Cardiac septum (tissue), 1 donor: ENCODE measurements at regions of chr20 and their contacts with region 1.

Region 1: DNA sequence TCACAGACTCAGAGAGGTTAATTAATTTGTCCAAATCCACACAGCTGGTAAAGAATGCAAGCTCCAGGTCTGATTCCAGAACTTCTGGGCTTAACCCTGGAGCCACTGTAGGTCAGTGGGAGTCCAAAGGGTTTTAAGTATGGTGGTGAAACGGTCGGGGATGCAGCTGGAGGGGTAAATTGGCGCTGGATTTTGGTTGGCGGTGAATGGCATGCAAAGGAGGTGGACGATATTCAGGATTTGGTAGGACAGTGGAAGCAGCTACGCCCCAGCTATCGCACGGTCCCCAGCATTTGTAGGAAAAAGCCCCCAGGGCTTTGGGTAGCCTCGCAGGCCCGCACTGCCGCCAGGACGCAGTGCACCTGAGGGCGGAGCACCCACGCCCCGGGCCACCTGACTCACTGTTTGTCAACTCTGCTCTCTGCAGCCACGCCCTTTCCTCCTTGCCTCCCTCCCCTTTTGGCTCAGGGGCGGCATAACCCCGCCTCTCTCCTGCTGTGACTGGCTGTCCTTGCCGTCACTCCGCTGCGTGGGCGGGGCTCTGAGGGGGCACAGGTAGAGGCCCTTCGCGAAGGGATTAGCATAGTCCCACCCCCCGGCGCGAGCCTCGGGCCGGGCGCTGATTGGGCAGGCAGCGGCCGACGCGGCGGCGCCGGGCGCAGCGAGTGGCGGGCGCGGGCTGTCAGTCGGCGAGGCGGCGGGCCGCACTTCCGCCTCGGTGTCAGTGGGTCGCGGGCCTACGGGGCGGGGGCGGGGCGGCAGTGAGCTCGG is at the start of gene OSBPL2:
- DNase-seq: peak; percentile 100
- total RNA-seq, gene OSBPL2: 55.1 TPM

Region 2: DNA sequence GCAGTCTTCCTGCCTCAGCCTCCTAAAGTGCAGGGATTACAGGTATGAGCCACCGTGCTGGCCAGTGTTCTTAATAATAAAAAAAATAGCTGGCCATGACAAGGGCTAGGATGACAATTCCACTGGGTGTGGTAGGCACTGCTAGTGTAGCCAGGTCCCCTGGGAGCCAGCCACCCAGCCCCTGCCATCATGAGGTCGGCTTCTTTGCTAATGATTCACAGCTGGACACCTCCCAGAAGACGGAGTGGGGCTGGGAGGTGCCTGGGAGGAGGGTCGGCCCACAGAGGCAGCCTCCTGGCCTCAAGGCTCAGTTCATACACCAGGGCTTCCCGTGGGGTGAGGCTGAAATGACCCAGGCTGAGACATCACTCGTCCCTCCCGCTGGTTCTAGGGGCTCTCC is 402.7 kb before region 1 on chr20:
- intact Hi-C with region 1: no loop called
- DNase-seq: no peak

Region 3: GRCh38 chr20:62104791-62105345 is 133.1 kb before region 1 on chr20:
- intact Hi-C with region 1: no loop called
- DNase-seq: no peak

Region 4: GRCh38 chr20:62182613-62183425 is 55.2 kb before region 1 on chr20 and contains the start of gene MTG2:
- intact Hi-C with region 1: loop called (anchors 2 kb)
- DNase-seq: peak; percentile 98
- total RNA-seq, gene MTG2: 26.6 TPM

Region 5: DNA sequence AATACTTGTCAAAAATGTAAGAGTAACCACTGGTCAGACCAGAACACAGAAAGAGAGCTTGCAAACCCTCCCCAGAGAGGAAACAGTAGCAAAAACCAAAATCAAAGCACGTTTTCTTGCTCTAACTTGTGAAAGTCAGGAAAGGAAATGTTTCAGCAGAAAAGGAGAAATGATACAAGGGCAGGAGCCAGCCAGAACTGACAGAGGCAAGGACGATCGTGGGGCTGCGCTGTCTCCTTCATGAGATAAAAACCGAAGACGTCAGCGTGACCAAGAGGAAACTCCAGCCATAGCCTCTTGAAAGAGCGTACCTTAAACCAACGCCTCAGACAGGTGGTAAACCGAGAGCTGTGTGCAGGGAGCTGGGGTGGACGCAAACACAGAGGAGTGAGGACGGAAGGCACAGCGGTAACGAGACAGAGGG is 101.7 kb after region 1 on chr20:
- intact Hi-C with region 1: no loop called
- DNase-seq: no peak

Region 6: DNA sequence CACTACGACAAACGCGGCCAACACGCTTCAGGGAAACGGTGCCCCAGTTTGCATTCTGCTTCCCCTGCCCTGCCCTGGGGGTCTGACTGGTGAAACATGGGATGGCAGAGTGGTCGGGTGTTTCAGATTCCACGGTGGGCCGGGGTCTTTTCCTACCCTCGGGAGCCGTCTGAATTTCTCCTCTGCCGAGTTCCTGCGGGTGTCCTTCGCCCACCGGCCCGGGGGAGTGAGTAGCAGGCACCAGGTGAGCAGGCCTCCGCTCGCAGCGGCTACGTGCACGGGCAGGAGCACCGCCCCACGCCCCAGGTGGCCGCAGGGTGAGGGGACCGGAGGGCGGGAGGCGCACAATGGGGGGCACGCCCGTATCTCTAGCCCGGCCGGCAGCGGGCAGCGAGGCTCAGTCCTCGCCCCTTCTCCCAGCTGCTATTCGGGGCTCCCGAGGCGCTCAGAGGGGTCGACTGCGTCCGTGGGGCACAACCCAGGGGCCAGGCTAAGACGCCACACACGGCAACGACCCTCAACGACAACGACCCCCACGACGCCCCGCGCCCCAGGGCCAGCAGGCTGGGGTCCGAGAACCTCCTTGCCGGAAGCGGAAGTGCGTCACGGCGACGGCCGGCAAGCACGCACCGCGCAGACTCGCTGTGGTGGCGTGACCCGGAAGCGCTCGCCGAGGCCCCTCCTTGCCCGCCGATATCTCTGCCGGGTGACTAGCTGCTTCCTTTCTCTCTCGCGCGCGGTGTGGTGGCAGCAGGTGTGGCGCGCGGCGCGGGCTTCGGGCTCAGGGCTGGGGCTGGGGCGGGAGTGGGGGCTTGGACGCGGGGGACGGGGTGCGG is 148.6 kb after region 1 on chr20 and contains the start of gene RPS21:
- intact Hi-C with region 1: no loop called
- DNase-seq: peak; percentile 96
- total RNA-seq, gene RPS21: 466 TPM